Spleen (tissue), 13 donors: ENCODE measurements at regions of chr13 and their contacts with region 1.

Region 1: DNA sequence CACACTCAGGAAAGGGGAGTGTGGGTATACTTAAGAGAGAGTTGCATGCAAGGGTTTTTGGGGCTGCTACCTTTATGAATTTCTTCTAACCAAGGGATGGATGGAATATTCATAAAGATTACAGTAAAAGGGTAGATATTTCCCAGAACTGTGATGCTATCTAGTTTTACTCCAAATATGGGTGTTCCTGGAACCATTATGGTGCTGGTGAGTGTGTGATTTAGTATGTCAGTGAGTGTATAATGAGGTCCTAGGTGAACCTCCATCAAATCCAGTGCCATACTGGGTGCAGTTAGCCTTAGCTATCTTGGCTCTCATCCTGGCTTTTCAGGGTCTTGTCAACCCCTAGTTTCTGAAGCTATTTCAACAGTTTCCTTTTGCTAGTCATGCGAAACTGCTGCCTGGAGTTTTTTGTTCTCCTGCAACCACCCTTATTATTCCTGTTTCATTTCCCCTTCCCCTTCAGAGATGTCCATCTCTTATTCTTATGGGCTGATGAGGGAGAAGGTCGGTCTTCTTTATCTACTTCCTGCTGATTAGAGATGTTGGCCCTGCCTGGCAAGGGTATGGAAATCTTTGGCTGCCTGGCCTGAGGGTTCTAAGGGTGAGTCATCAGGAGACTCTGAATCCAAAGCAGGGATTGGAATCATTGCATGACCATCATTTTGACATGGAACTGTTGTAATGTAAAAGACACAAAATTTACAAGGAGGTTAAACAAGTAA is 202.3 kb downstream of the NBEA start:
- DNase-seq: no peak
- H3K4me3 ChIP-seq: no peak overlapping the region
- H3K27ac ChIP-seq: peak overlapping the region in 1 of 8 donors; percentile 35
- H3K4me1 ChIP-seq: peaks cover 0 to 18% (median 0%) of the 10 kb centered on the region in 6 donors
- H3K27me3 ChIP-seq: no peaks in the 10 kb centered on the region
- CTCF ChIP-seq: no peak
- POLR2A ChIP-seq: no peak

Region 2: GRCh38 chr13:34044660-34045080 is 1099.7 kb before region 1 on chr13:
- intact Hi-C with region 1: no loop called
- DNase-seq: no peak
- H3K4me3 ChIP-seq: no peak overlapping the region
- H3K27ac ChIP-seq: no peak overlapping the region
- H3K4me1 ChIP-seq: no peaks in the 10 kb centered on the region
- H3K27me3 ChIP-seq: no peaks in the 10 kb centered on the region
- CTCF ChIP-seq: no peak
- POLR2A ChIP-seq: no peak

Region 3: GRCh38 chr13:34941835-34942731 is 202.2 kb before region 1 on chr13 and contains the start of gene NBEA:
- intact Hi-C with region 1: loop called (anchors 10 kb)
- DNase-seq: peak; percentile 94
- H3K4me3 ChIP-seq: peak within 1 kb of the TSS; percentile 73 to 92 (median 84)
- H3K27ac ChIP-seq: peak within 1 kb of the TSS; percentile 71 to 88 (median 86)
- H3K4me1 ChIP-seq: peaks cover 7 to 48% (median 24%) of the 10 kb centered on the region in 6 donors
- H3K27me3 ChIP-seq: peaks cover 0 to 30% (median 7%) of the 10 kb centered on the region in 7 donors
- CTCF ChIP-seq: peak in 8 of 11 experiments; percentile 12 to 61 (median 48)
- POLR2A ChIP-seq: peak in 1 of 3 donors; percentile 18
- total RNA-seq, gene NBEA: 11.0 to 27.7 (median 14.2) TPM

Region 4: DNA sequence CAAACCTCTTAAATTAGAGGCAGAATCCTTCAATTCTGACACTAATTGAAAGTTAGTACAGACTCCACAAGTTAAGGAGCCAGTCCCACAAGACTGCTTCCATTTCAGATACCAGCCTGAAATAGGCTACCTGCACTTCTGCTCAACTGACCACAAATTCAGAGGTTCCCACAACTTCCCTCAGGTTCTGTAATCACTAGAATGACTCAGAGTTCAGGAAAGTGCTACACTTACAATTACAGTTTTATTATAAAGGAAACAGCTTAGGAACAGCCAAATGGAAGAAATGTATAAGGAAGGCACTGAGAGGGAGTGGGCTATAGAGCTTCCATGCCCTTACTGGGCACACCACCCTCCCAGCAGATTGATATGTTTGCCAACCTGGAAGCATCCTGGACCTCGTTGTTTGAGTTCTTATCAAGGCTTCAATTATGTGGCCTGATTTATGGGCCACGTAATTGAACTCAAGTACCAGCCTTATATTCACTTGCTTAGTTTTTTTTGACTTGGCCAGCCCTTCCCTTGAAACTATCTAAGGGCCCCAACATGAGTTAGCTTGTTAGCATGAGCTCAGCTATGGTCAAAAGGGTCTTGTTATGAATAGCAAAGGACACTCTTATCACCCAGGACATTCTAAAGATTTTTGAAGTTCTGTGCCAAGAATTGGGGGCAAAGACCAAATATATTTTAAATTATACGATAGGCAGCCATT is 176.3 kb before region 1 on chr13:
- intact Hi-C with region 1: no loop called
- DNase-seq: no peak
- H3K4me3 ChIP-seq: no peak overlapping the region
- H3K27ac ChIP-seq: no peak overlapping the region
- H3K4me1 ChIP-seq: no peaks in the 10 kb centered on the region
- H3K27me3 ChIP-seq: no peaks in the 10 kb centered on the region
- CTCF ChIP-seq: no peak
- POLR2A ChIP-seq: no peak